ENCODE measurements at regions of chr20 and their contacts with region 1.

Region 1: GRCh38 chr20:815914-816606 is 17.5 kb upstream of the FAM110A start:
- DNase-seq: peak; percentile 80
- ATAC-seq: peak; percentile 78
- H3K4me3 ChIP-seq: no peak overlapping the region
- H3K4me3 Mint-ChIP-seq: no peak overlapping the region
- H3K27ac ChIP-seq: no peak overlapping the region
- H3K27ac Mint-ChIP-seq: no peak overlapping the region
- H3K4me1 ChIP-seq: peaks cover 0 to 3% of the 10 kb centered on the region in 2 donors
- H3K4me1 Mint-ChIP-seq: no peaks in the 10 kb centered on the region
- H3K27me3 ChIP-seq: no peaks in the 10 kb centered on the region
- H3K27me3 Mint-ChIP-seq: peaks cover 27% of the 10 kb centered on the region
- CTCF ChIP-seq: peak; percentile 99

Region 2: GRCh38 chr20:462199-462991 is 353.7 kb before region 1 on chr20 and contains the start of gene TBC1D20:
- CTCF ChIA-PET with region 1: no interaction called
- POLR2A ChIA-PET with region 1: no interaction called
- intact Hi-C with region 1: no loop called
- DNase-seq: peak; percentile 94
- ATAC-seq: peak; percentile 95
- H3K4me3 ChIP-seq: peak within 1 kb of the TSS; percentile 58 to 83 (median 76)
- H3K4me3 Mint-ChIP-seq: peak within 1 kb of the TSS; percentile 94
- H3K27ac ChIP-seq: peak within 1 kb of the TSS; percentile 61 to 85
- H3K27ac Mint-ChIP-seq: peak within 1 kb of the TSS; percentile 95
- H3K4me1 ChIP-seq: peaks cover 14 to 17% of the 10 kb centered on the region in 2 donors
- H3K4me1 Mint-ChIP-seq: peaks cover 37% of the 10 kb centered on the region
- H3K27me3 ChIP-seq: peaks cover 0 to 1% (median 0%) of the 10 kb centered on the region in 4 experiments
- H3K27me3 Mint-ChIP-seq: peaks cover 3% of the 10 kb centered on the region
- CTCF ChIP-seq: no peak
- total RNA-seq, gene TBC1D20: 37.9 and 40.0 TPM in 2 replicates

Region 3: GRCh38 chr20:699811-700338 is 116.2 kb before region 1 on chr20:
- CTCF ChIA-PET with region 1: no interaction called
- POLR2A ChIA-PET with region 1: no interaction called
- intact Hi-C with region 1: no loop called
- DNase-seq: no peak
- ATAC-seq: no peak
- H3K4me3 ChIP-seq: no peak overlapping the region
- H3K4me3 Mint-ChIP-seq: no peak overlapping the region
- H3K27ac ChIP-seq: no peak overlapping the region
- H3K27ac Mint-ChIP-seq: no peak overlapping the region
- H3K4me1 ChIP-seq: no peaks in the 10 kb centered on the region
- H3K4me1 Mint-ChIP-seq: no peaks in the 10 kb centered on the region
- H3K27me3 ChIP-seq: no peaks in the 10 kb centered on the region
- H3K27me3 Mint-ChIP-seq: peaks cover 11% of the 10 kb centered on the region
- CTCF ChIP-seq: no peak

Region 4: GRCh38 chr20:760751-761417 is 55.2 kb before region 1 on chr20:
- CTCF ChIA-PET with region 1: no interaction called
- POLR2A ChIA-PET with region 1: no interaction called
- intact Hi-C with region 1: no loop called
- DNase-seq: peak; percentile 10
- ATAC-seq: no peak
- H3K4me3 ChIP-seq: no peak overlapping the region
- H3K4me3 Mint-ChIP-seq: no peak overlapping the region
- H3K27ac ChIP-seq: no peak overlapping the region
- H3K27ac Mint-ChIP-seq: no peak overlapping the region
- H3K4me1 ChIP-seq: no peaks in the 10 kb centered on the region
- H3K4me1 Mint-ChIP-seq: no peaks in the 10 kb centered on the region
- H3K27me3 ChIP-seq: peaks cover 0 to 6% (median 0%) of the 10 kb centered on the region in 4 experiments
- H3K27me3 Mint-ChIP-seq: peaks cover 18% of the 10 kb centered on the region
- CTCF ChIP-seq: peak; percentile 69

Region 5: GRCh38 chr20:878511-879307 is 62.6 kb after region 1 on chr20:
- CTCF ChIA-PET with region 1: no interaction called
- POLR2A ChIA-PET with region 1: no interaction called
- intact Hi-C with region 1: loop called (anchors 5 kb)
- DNase-seq: no peak
- ATAC-seq: no peak
- H3K4me3 ChIP-seq: no peak overlapping the region
- H3K4me3 Mint-ChIP-seq: no peak overlapping the region
- H3K27ac ChIP-seq: no peak overlapping the region
- H3K27ac Mint-ChIP-seq: no peak overlapping the region
- H3K4me1 ChIP-seq: no peaks in the 10 kb centered on the region
- H3K4me1 Mint-ChIP-seq: no peaks in the 10 kb centered on the region
- H3K27me3 ChIP-seq: peaks cover 0 to under 1% (median 0%) of the 10 kb centered on the region in 4 experiments
- H3K27me3 Mint-ChIP-seq: peaks cover 3% of the 10 kb centered on the region
- CTCF ChIP-seq: no peak

Region 6: GRCh38 chr20:1108437-1108920 is 292.4 kb after region 1 on chr20:
- CTCF ChIA-PET with region 1: interaction called, 20 read pairs
- POLR2A ChIA-PET with region 1: no interaction called
- intact Hi-C with region 1: loop called (anchors 1 kb)
- DNase-seq: peak; percentile 58
- ATAC-seq: peak; percentile 76
- H3K4me3 ChIP-seq: no peak overlapping the region
- H3K4me3 Mint-ChIP-seq: no peak overlapping the region
- H3K27ac ChIP-seq: no peak overlapping the region
- H3K27ac Mint-ChIP-seq: no peak overlapping the region
- H3K4me1 ChIP-seq: peaks cover 0 to 4% of the 10 kb centered on the region in 2 donors
- H3K4me1 Mint-ChIP-seq: peaks cover 2% of the 10 kb centered on the region
- H3K27me3 ChIP-seq: peaks cover 0 to 6% (median 0%) of the 10 kb centered on the region in 4 experiments
- H3K27me3 Mint-ChIP-seq: no peaks in the 10 kb centered on the region
- CTCF ChIP-seq: peak; percentile 81

Region 7: DNA sequence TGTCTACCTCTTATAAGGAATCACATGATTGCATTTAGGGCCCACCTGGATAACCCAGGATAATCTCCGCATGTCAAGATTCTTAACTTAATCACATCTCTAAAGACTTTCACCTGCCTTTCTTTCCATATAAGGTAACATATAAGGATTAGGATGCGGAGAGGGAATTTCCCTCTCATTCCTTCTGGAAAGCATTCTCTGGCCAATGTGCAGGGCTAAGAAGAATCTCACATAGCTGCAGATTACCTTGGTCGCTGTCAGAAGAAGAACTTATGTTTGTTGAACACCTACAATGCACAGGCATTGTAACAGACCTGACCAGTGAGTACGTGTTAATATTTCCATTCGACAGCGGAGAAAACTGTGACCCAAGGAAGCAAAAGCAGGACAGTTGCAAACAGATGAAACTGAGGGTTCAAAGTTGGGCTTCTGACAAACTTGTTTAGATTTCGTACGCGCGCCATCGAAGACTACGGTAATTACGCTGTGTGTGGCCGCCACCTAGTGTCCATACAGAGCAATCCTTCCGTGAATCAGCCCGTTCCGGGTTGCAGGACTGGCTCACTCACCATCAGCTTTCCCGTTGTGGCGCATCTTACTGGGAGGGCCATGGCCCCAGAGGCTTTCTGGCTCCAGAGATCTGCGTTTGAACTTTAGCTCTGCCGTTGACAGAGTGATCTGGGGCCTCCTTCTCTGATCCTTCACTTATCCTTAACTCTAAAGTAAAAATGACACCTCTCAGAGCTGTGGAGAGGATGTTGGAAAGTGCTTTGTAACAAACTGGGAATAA is 396.7 kb after region 1 on chr20:
- CTCF ChIA-PET with region 1: interaction called, 10 read pairs
- POLR2A ChIA-PET with region 1: no interaction called
- intact Hi-C with region 1: no loop called
- DNase-seq: peak; percentile 72
- ATAC-seq: peak; percentile 83
- H3K4me3 ChIP-seq: no peak overlapping the region
- H3K4me3 Mint-ChIP-seq: peak overlapping the region; percentile 18
- H3K27ac ChIP-seq: no peak overlapping the region
- H3K27ac Mint-ChIP-seq: no peak overlapping the region
- H3K4me1 ChIP-seq: peaks cover 0 to 3% of the 10 kb centered on the region in 2 donors
- H3K4me1 Mint-ChIP-seq: peaks cover 3% of the 10 kb centered on the region
- H3K27me3 ChIP-seq: peaks cover 0 to 15% (median 11%) of the 10 kb centered on the region in 4 experiments
- H3K27me3 Mint-ChIP-seq: peaks cover 46% of the 10 kb centered on the region
- CTCF ChIP-seq: peak; percentile 88